ENCODE measurements at regions of chr15 and their contacts with region 1.

Region 1: GRCh38 chr15:50046867-50047266 is 72.2 kb downstream of the ATP8B4 start:
- DNase-seq: no peak
- H3K4me3 Mint-ChIP-seq: no peak overlapping the region
- H3K27ac Mint-ChIP-seq: peak overlapping the region; percentile 85
- H3K4me1 Mint-ChIP-seq: peaks cover 27% of the 10 kb centered on the region
- H3K27me3 Mint-ChIP-seq: no peaks in the 10 kb centered on the region

Region 2: GRCh38 chr15:50066192-50066591 is 19.3 kb after region 1 on chr15:
- intact Hi-C with region 1: loop called (anchors 1 kb)
- DNase-seq: peak; percentile 80
- H3K4me3 Mint-ChIP-seq: peak overlapping the region; percentile 27
- H3K27ac Mint-ChIP-seq: peak overlapping the region; percentile 91
- H3K4me1 Mint-ChIP-seq: peaks cover 38% of the 10 kb centered on the region
- H3K27me3 Mint-ChIP-seq: no peaks in the 10 kb centered on the region

Measured in activated CD4-positive, alpha-beta T cell treated with anti-CD3 and anti-CD28 coated beads, Interleukin-2, amount 10 ng/mL, durations not matched to agents 24 days and 14 days (primary cell).